PC-9 (cell line): ENCODE measurements at regions of chr22 and their contacts with region 1.

Region 1: GRCh38 chr22:36546092-36546804 is 17.3 kb upstream of the EIF3D start:
- DNase-seq: peak; percentile 58 to 59
- H3K4me3 ChIP-seq: peak overlapping the region; percentile 42
- H3K27ac ChIP-seq: 0 out of 2 replicates have a peak overlapping the region, but pooled peaks have one; percentile 7
- H3K4me1 ChIP-seq: peaks cover 32% of the 10 kb centered on the region
- H3K27me3 ChIP-seq: peaks cover 8% of the 10 kb centered on the region
- CTCF ChIP-seq: peak; percentile 91

Region 2: GRCh38 chr22:35719212-35719869 is 826.9 kb before region 1 on chr22:
- CTCF ChIA-PET with region 1: no interaction called
- POLR2A ChIA-PET with region 1: no interaction called
- intact Hi-C with region 1: no loop called
- DNase-seq: no peak
- H3K4me3 ChIP-seq: no peak overlapping the region
- H3K27ac ChIP-seq: no peak overlapping the region
- H3K4me1 ChIP-seq: no peaks in the 10 kb centered on the region
- H3K27me3 ChIP-seq: no peaks in the 10 kb centered on the region
- CTCF ChIP-seq: no peak

Region 3: GRCh38 chr22:36221799-36222751 is 324.2 kb before region 1 on chr22:
- CTCF ChIA-PET with region 1: no interaction called
- POLR2A ChIA-PET with region 1: no interaction called
- intact Hi-C with region 1: no loop called
- DNase-seq: peak in 1 of 2 experiments; percentile 52
- H3K4me3 ChIP-seq: no peak overlapping the region
- H3K27ac ChIP-seq: no peak overlapping the region
- H3K4me1 ChIP-seq: no peaks in the 10 kb centered on the region
- H3K27me3 ChIP-seq: no peaks in the 10 kb centered on the region; the same call in 1 of the 2 replicates
- CTCF ChIP-seq: peak; percentile 74

Region 4: GRCh38 chr22:36311386-36312358 is 234.6 kb before region 1 on chr22:
- CTCF ChIA-PET with region 1: no interaction called
- POLR2A ChIA-PET with region 1: interaction called, 19 read pairs
- intact Hi-C with region 1: no loop called
- DNase-seq: peak; percentile 72 to 78
- H3K4me3 ChIP-seq: no peak overlapping the region
- H3K27ac ChIP-seq: no peak overlapping the region
- H3K4me1 ChIP-seq: 0 out of 2 replicates have a peak, but pooled peaks cover 9% of the 10 kb centered on the region
- H3K27me3 ChIP-seq: no peaks in the 10 kb centered on the region
- CTCF ChIP-seq: no peak

Region 5: DNA sequence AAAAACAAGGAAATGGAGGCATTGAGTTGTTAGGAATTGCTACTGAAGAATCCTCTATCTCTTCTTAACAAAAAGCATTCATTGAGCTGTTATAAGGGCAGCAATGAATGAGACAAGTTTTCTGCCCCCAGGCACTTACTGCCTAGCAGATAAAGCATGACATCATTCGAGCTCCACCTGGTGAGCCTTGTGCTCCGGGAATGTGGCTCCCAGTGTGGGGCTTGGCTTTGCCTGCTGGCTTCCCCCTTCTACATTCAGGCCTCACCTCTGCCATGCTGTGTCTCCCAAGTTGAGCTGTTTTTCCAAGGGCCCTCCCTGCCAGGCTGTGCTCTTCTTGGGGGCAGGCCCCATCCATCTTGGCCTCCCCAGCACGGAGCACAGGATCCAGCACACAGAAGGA is 39.6 kb after region 1 on chr22:
- CTCF ChIA-PET with region 1: interaction called, 7 read pairs
- POLR2A ChIA-PET with region 1: interaction called, 3 read pairs
- intact Hi-C with region 1: loop called (anchors 1 kb)
- DNase-seq: peak; percentile 76 to 81
- H3K4me3 ChIP-seq: no peak overlapping the region
- H3K27ac ChIP-seq: peak overlapping the region; percentile 16
- H3K4me1 ChIP-seq: peaks cover 19% of the 10 kb centered on the region
- H3K27me3 ChIP-seq: peaks cover 20% of the 10 kb centered on the region
- CTCF ChIP-seq: no peak

Region 6: GRCh38 chr22:36702842-36703215 is 156.6 kb after region 1 on chr22:
- CTCF ChIA-PET with region 1: no interaction called
- POLR2A ChIA-PET with region 1: no interaction called
- intact Hi-C with region 1: no loop called
- DNase-seq: no peak
- H3K4me3 ChIP-seq: no peak overlapping the region
- H3K27ac ChIP-seq: no peak overlapping the region
- H3K4me1 ChIP-seq: peaks cover 4% of the 10 kb centered on the region; the same call in 1 of the 2 replicates
- H3K27me3 ChIP-seq: peaks cover 94% of the 10 kb centered on the region
- CTCF ChIP-seq: no peak

Region 7: GRCh38 chr22:36757668-36758211 is 211.5 kb after region 1 on chr22:
- CTCF ChIA-PET with region 1: interaction called, 3 read pairs
- POLR2A ChIA-PET with region 1: no interaction called
- intact Hi-C with region 1: loop called (anchors 1 kb)
- DNase-seq: peak; percentile 65 to 84
- H3K4me3 ChIP-seq: no peak overlapping the region
- H3K27ac ChIP-seq: no peak overlapping the region
- H3K4me1 ChIP-seq: peaks cover 6% of the 10 kb centered on the region
- H3K27me3 ChIP-seq: peaks cover 23% of the 10 kb centered on the region
- CTCF ChIP-seq: peak; percentile 97

Region 8: DNA sequence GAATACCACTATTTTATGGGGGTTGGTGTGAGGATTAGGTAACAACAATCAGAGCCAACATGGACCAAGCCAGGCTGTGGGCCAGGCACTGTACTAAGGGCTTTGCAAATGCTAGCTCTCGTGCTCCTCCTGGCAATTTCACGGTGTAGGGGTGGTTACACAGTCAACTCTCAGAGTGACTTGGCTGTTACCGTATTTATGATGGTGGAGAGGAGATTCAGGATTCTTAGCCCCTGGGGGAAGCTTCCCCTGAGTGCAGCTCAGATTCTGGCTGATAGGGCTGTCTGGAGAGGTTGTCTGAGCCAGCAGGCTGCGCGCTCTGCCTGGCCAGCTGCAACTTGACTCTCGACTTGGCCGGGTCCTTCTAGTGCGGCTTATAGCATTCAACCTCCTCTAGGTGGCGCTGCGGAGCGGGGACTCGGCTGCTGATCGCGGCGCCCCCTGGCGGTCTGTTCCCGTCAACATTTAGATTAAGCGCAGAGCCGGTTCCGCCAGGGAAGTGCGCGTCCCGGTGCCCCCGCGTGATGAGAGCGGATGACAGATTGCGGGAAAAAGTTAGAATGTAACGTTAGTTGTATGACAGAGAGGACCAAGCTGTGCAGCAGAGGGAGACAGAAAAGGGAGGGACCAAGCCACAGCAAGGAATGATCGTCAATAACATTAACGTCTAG is 310.0 kb after region 1 on chr22:
- CTCF ChIA-PET with region 1: interaction called, 7 read pairs
- POLR2A ChIA-PET with region 1: interaction called, 4 read pairs
- intact Hi-C with region 1: loop called (anchors 1 kb)
- DNase-seq: peak; percentile 68 to 94
- H3K4me3 ChIP-seq: peak overlapping the region; percentile 13; the same call in 1 of the 2 replicates
- H3K27ac ChIP-seq: no peak overlapping the region
- H3K4me1 ChIP-seq: peaks cover 7% of the 10 kb centered on the region
- H3K27me3 ChIP-seq: no peaks in the 10 kb centered on the region
- CTCF ChIP-seq: peak; percentile 100

Region 9: GRCh38 chr22:36977947-36978660 is 431.9 kb after region 1 on chr22:
- CTCF ChIA-PET with region 1: interaction called, 10 read pairs
- POLR2A ChIA-PET with region 1: no interaction called
- intact Hi-C with region 1: loop called (anchors 1 kb)
- DNase-seq: peak; percentile 72 to 87
- H3K4me3 ChIP-seq: peak overlapping the region; percentile 51
- H3K27ac ChIP-seq: no peak overlapping the region
- H3K4me1 ChIP-seq: peaks cover 5% of the 10 kb centered on the region
- H3K27me3 ChIP-seq: no peaks in the 10 kb centered on the region
- CTCF ChIP-seq: peak; percentile 99

Region 10: GRCh38 chr22:37260901-37261336 is 714.7 kb after region 1 on chr22:
- CTCF ChIA-PET with region 1: no interaction called
- POLR2A ChIA-PET with region 1: no interaction called
- intact Hi-C with region 1: loop called (anchors 5 kb)
- DNase-seq: peak in 1 of 2 experiments; percentile 67
- H3K4me3 ChIP-seq: no peak overlapping the region
- H3K27ac ChIP-seq: no peak overlapping the region
- H3K4me1 ChIP-seq: peaks cover 19% of the 10 kb centered on the region; the same call in 1 of the 2 replicates
- H3K27me3 ChIP-seq: no peaks in the 10 kb centered on the region
- CTCF ChIP-seq: peak; percentile 98

Region 11: GRCh38 chr22:38485783-38486182 is 1939.5 kb after region 1 on chr22:
- CTCF ChIA-PET with region 1: no interaction called
- POLR2A ChIA-PET with region 1: no interaction called
- intact Hi-C with region 1: no loop called
- DNase-seq: peak in 1 of 2 experiments; percentile 27
- H3K4me3 ChIP-seq: no peak overlapping the region
- H3K27ac ChIP-seq: no peak overlapping the region
- H3K4me1 ChIP-seq: no peaks in the 10 kb centered on the region
- H3K27me3 ChIP-seq: no peaks in the 10 kb centered on the region
- CTCF ChIP-seq: no peak